Mammary epithelial cell (primary cell): ENCODE measurements at regions of chr1 and their contacts with region 1.

Region 1: GRCh38 chr1:215181518-215181917 is 99.0 kb downstream of the KCNK2 start:
- DNase-seq: peak; percentile 8
- H3K4me3 ChIP-seq: no peak overlapping the region
- H3K27ac ChIP-seq: no peak overlapping the region
- H3K4me1 ChIP-seq: no peaks in the 10 kb centered on the region
- H3K27me3 ChIP-seq: no peaks in the 10 kb centered on the region
- CTCF ChIP-seq: peak; percentile 6 to 55

Region 2: DNA sequence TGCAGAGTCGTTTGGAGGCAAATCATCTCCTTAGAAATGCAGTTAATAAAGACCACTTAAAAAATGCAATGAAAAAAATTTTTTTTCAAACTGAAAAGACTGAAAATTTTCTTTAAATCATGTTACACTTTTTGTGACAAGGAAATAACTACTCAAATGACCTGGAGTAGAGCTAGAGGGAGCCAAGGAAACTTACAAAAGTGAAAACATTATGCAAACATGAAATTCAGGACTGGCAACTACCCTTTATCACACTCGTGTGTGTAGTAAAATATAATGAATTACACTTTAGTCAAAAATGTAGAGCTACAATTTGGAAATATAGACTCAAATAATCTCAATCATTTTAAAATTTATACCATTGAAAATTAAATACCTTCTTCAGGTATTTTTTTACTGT is 43.0 kb after region 1 on chr1:
- CTCF ChIA-PET with region 1: no interaction called
- dilution Hi-C with region 1: loop called (anchors 5 kb)
- in situ Hi-C with region 1: no loop called
- intact Hi-C with region 1: no loop called
- DNase-seq: no peak
- H3K4me3 ChIP-seq: no peak overlapping the region
- H3K27ac ChIP-seq: no peak overlapping the region
- H3K4me1 ChIP-seq: no peaks in the 10 kb centered on the region
- H3K27me3 ChIP-seq: no peaks in the 10 kb centered on the region
- CTCF ChIP-seq: no peak

Region 3: GRCh38 chr1:215517441-215517891 is 335.9 kb after region 1 on chr1:
- CTCF ChIA-PET with region 1: no interaction called
- dilution Hi-C with region 1: no loop called
- in situ Hi-C with region 1: loop called (anchors 10 to 25 kb)
- intact Hi-C with region 1: loop called (anchors 1 kb)
- DNase-seq: peak; percentile 56
- H3K4me3 ChIP-seq: no peak overlapping the region
- H3K27ac ChIP-seq: no peak overlapping the region
- H3K4me1 ChIP-seq: no peaks in the 10 kb centered on the region
- H3K27me3 ChIP-seq: no peaks in the 10 kb centered on the region
- CTCF ChIP-seq: peak; percentile 65 to 79